Ovary (tissue), 10 donors: ENCODE measurements at regions of chr4 and their contacts with region 1.

Region 1: GRCh38 chr4:8267077-8267476 is 2.5 kb upstream of the HTRA3 start:
- DNase-seq: peak; percentile 75 to 88 (median 85)
- H3K4me3 ChIP-seq: no peak overlapping the region
- H3K27ac ChIP-seq: peak overlapping the region; percentile 38 to 41
- H3K4me1 ChIP-seq: peaks cover 18% of the 10 kb centered on the region
- H3K27me3 ChIP-seq: no peaks in the 10 kb centered on the region
- CTCF ChIP-seq: peak; percentile 38 to 79 (median 61)
- EP300 ChIP-seq: no peak
- POLR2A ChIP-seq: no peak

Region 2: DNA sequence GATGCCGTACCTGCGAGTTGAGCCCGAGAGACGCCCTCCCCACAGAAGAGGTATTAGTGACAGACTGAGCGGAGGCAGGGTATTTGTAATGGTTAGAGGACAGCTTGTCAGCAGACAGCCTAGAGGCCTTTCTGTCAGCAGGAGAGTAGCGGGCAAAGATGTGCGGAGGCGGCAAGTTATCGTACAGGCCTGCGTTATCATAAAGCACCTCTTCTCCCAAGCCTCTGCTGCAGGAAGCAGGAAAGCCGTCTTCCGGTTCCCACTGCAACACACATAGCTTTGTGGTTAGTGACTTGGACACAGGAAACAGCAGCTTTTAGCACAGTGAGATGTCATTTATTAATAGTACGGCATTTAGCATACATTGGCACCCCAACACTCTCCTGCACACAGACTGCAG is 485.7 kb before region 1 on chr4:
- intact Hi-C with region 1: no loop called
- DNase-seq: peak in 2 of 5 donors; percentile 14 to 23
- H3K4me3 ChIP-seq: no peak overlapping the region
- H3K27ac ChIP-seq: no peak overlapping the region
- H3K4me1 ChIP-seq: peaks cover 19% of the 10 kb centered on the region
- H3K27me3 ChIP-seq: no peaks in the 10 kb centered on the region
- CTCF ChIP-seq: no peak
- EP300 ChIP-seq: no peak
- POLR2A ChIP-seq: no peak

Region 3: DNA sequence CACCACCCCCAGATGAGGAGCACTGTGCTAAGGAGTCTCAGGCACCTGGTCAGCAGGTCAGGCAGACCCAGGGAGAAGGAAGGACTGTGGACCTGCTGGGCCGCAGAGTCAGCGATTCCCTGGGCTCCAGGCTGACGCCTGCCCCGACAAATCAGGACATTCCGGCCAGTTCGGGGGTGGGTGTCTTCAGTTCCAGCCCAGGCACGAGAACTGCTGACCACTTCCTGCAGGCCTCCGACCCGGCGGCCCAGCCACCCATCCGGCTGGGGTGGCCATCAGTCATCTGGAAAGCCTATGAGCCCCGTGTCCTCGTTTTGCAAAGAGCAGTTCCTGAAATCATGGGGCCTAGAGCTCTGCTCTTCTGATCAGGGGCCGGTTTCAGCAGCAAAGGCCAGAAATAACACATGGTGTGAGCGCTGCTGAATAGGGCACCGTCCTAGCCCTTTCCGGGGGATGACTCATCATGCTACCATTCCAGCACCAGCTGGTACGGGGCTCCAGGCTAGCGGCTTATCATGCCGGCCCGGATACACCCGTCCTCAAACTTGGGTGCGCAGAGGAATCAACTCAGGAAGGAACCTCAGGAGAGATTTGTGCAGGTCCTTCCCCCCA is 75.8 kb before region 1 on chr4:
- intact Hi-C with region 1: no loop called
- DNase-seq: peak in 4 of 5 donors; percentile 55 to 61 (median 58)
- H3K4me3 ChIP-seq: no peak overlapping the region
- H3K27ac ChIP-seq: no peak overlapping the region
- H3K4me1 ChIP-seq: peaks cover 11% of the 10 kb centered on the region
- H3K27me3 ChIP-seq: no peaks in the 10 kb centered on the region
- CTCF ChIP-seq: no peak
- EP300 ChIP-seq: no peak
- POLR2A ChIP-seq: no peak

Region 4: GRCh38 chr4:8241895-8242696 is 25.0 kb before region 1 on chr4:
- intact Hi-C with region 1: loop called in 2 of 4 experiments (anchors 1 to 2 kb)
- DNase-seq: peak; percentile 92 to 95 (median 93)
- H3K4me3 ChIP-seq: no peak overlapping the region
- H3K27ac ChIP-seq: peak overlapping the region in 1 of 2 donors; percentile 20
- H3K4me1 ChIP-seq: peaks cover 3% of the 10 kb centered on the region
- H3K27me3 ChIP-seq: no peaks in the 10 kb centered on the region
- CTCF ChIP-seq: peak; percentile 96 to 98 (median 97)
- EP300 ChIP-seq: no peak
- POLR2A ChIP-seq: no peak

Region 5: GRCh38 chr4:8247047-8247930 is 19.8 kb before region 1 on chr4:
- intact Hi-C with region 1: loop called in 2 of 4 experiments (anchors 1 to 2 kb)
- DNase-seq: peak in 1 of 5 donors; percentile 60
- H3K4me3 ChIP-seq: no peak overlapping the region
- H3K27ac ChIP-seq: no peak overlapping the region
- H3K4me1 ChIP-seq: peaks cover 2% of the 10 kb centered on the region
- H3K27me3 ChIP-seq: no peaks in the 10 kb centered on the region
- CTCF ChIP-seq: no peak
- EP300 ChIP-seq: no peak
- POLR2A ChIP-seq: no peak

Region 6: GRCh38 chr4:8315435-8316250 is 48.6 kb after region 1 on chr4:
- intact Hi-C with region 1: loop called in 1 of 4 experiments (anchors 10 kb)
- DNase-seq: peak; percentile 73 to 81 (median 79)
- H3K4me3 ChIP-seq: no peak overlapping the region
- H3K27ac ChIP-seq: peak overlapping the region in 1 of 2 donors; percentile 11
- H3K4me1 ChIP-seq: peaks cover 18% of the 10 kb centered on the region
- H3K27me3 ChIP-seq: no peaks in the 10 kb centered on the region
- CTCF ChIP-seq: no peak
- EP300 ChIP-seq: no peak
- POLR2A ChIP-seq: no peak